ENCODE measurements at regions of chr19 and their contacts with region 1.

Region 1: DNA sequence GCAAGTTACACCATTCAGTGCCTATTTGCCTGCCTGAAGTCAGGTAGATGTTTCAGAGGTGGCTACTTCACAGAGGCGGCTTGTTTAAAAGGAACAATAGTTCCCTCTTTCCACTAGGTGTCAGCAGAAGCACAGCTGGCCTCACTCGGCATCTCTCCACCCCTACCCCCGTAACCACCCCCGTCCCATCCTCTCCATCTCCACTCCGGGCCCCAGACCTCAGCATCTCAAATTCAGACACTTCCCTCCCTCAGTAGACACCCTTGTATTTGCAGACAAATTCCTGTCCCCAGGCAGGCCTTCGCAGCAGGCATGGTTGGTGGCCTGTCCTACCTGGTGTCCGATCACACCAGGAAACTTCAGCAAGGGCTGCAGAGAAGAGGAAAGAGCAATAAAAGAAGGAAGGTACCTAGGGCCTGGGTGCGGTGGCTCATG is 9.1 kb upstream of the DPP9 start:
- DNase-seq: peak; percentile 70 to 75
- H3K4me3 ChIP-seq: no peak overlapping the region
- H3K4me1 ChIP-seq: no peaks in the 10 kb centered on the region
- H3K27me3 ChIP-seq: 0 out of 2 replicates have a peak, but pooled peaks cover 3% of the 10 kb centered on the region

Region 2: DNA sequence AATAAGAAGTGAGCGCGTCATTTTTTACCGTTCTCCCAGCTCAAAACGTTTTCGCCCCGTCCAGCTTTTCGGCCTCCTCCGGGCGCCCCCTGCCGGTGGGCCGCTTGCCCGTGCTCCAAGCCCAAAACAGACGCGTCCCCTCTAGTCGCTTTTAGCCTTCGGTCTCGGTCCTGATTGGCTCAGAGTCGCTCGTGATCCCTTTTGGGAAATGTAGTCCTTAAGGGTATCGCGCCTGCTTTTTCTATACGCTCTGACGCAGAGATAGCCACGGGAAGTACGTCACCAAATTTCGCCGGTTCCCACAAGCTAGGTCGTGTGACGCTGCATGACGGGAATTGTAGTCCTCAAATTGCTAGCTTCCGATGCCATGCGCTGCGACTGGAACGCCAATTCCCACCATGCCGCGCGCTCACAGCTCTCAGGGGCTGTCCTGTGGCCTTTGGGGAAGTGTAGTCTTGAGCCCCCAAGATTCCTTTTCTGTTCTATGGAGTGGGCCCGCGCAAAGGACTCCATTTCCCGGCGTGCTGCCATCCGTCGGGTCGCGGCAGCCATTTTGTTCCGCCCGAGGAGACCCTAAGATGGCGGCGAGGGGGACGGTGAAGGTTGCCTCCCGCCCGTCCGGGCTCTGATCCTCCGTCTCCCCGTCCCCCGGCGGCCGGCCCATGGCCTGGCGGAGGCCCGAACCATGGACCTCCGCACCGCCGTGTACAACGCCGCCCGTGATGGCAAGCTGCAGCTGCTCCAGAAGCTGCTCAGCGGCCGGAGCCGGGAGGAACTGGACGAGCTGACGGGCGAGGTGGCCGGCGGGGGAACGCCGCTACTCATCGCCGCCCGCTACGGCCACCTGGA is 58.7 kb after region 1 on chr19 and contains the start of gene FEM1A:
- in situ Hi-C with region 1: loop called (anchors 5 kb)
- DNase-seq: peak; percentile 98 to 100
- H3K4me3 ChIP-seq: peak within 1 kb of the TSS; percentile 97
- H3K4me1 ChIP-seq: no peaks in the 10 kb centered on the region; the same call in 1 of the 2 replicates
- H3K27me3 ChIP-seq: no peaks in the 10 kb centered on the region

Region 3: DNA sequence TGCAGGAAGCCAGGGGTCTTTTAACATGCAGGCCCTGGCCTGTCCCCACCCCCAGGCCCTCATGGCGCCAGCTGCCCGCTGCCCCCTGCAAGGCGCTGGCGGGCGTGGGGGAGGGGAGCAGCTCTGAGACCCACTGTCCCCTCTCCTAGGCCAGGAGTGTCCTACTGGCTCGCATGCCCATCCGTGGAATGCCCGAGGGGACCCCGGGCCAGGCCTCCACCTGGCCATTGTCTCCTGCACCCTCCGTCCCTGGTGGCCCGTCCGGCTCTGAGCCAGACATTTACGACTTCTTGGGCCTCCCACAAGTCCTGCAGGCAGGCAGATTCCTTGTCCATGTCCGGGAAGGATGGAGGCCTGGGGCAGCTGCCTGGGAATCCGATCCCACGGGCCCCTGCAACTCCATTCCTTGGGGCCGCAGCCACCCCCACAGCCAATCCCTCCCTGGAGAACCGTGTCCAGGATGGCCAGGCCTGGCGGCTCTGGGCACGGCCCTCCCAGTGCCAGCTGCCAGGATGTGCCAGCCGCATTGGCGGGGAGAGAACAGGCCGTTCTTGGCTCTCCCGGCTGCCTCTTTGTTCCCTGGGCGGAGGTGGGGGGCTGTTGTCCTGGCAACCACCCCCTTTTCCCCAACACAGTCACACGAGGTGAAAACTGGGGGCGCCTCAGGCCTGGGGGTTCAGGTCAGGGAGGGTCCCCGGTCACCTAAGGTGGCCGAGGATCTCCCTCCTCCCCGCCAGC is 145.2 kb after region 1 on chr19:
- in situ Hi-C with region 1: no loop called
- DNase-seq: no peak
- H3K4me3 ChIP-seq: no peak overlapping the region
- H3K4me1 ChIP-seq: no peaks in the 10 kb centered on the region
- H3K27me3 ChIP-seq: no peaks in the 10 kb centered on the region

Measured in HAP-1 (cell line).